Vagina (tissue), 2 donors: ENCODE measurements at regions of chr1 and their contacts with region 1.

Region 1: GRCh38 chr1:55103891-55104290 is 64.5 kb downstream of the PCSK9 start:
- DNase-seq: no peak
- H3K4me3 ChIP-seq: no peak overlapping the region
- H3K27ac ChIP-seq: no peak overlapping the region
- H3K4me1 ChIP-seq: no peaks in the 10 kb centered on the region
- H3K27me3 ChIP-seq: no peaks in the 10 kb centered on the region
- CTCF ChIP-seq: no peak
- POLR2A ChIP-seq: no peak

Region 2: GRCh38 chr1:54919367-54920359 is 184.2 kb before region 1 on chr1:
- intact Hi-C with region 1: no loop called
- DNase-seq: no peak
- H3K4me3 ChIP-seq: no peak overlapping the region
- H3K27ac ChIP-seq: no peak overlapping the region
- H3K4me1 ChIP-seq: no peaks in the 10 kb centered on the region
- H3K27me3 ChIP-seq: no peaks in the 10 kb centered on the region
- CTCF ChIP-seq: no peak
- POLR2A ChIP-seq: no peak

Region 3: GRCh38 chr1:55073187-55073916 is 30.5 kb before region 1 on chr1:
- intact Hi-C with region 1: loop called (anchors 1 kb)
- DNase-seq: no peak
- H3K4me3 ChIP-seq: no peak overlapping the region
- H3K27ac ChIP-seq: no peak overlapping the region
- H3K4me1 ChIP-seq: no peaks in the 10 kb centered on the region
- H3K27me3 ChIP-seq: no peaks in the 10 kb centered on the region
- CTCF ChIP-seq: no peak
- POLR2A ChIP-seq: no peak